ENCODE measurements at regions of chr9 and their contacts with region 1.

Region 1: DNA sequence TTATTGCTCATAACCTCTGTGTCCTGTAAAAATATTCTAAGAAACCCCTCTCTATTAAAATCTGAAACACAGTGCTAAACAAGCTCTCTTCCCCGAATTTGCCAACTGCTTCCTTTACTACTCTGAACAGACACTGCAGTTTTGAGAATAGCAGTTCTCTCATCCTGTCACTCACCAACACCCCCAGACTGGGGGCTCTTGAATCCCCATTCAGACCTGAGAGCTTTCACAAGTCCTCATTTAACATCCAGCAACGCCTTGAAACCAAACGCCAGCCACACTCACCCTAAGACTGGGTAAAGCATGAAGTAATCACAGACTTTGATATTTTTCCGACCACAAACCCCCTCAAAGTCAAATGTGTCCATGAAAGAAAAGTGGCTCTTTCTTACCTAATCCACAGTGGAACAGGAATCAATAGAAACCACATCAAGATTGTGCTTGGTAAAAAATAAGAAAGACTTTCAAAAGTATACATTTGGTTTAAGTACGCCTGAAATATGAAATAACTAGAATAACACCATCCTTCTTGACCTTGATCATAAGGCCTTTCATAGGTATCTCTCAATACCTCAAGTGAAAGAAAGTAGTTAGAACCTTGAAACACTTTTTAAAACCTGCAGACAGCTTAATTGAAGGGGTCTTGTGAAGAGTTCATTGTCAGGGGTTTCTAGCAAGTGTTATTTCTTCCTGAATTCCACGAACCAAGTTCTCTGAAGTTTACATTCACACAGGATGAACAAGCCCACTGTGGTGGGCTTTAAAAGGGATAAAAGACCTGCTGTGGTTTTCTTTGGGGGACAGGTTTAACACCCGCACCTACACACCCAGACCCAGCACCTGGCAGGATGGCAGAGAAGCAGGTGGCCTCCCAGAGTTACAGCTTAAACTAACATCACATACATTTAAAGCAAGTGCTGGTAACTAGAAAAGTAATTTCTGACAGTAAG is 412.6 kb downstream of the MLLT3 start:
- DNase-seq: peak; percentile 62
- H3K4me3 Mint-ChIP-seq: peak overlapping the region; percentile 25
- H3K27ac Mint-ChIP-seq: peak overlapping the region; percentile 89
- H3K4me1 Mint-ChIP-seq: peaks cover 39% of the 10 kb centered on the region
- H3K27me3 Mint-ChIP-seq: no peaks in the 10 kb centered on the region

Region 2: GRCh38 chr9:19946441-19947109 is 263.1 kb before region 1 on chr9:
- intact Hi-C with region 1: loop called (anchors 1 kb)
- DNase-seq: no peak
- H3K4me3 Mint-ChIP-seq: no peak overlapping the region
- H3K27ac Mint-ChIP-seq: no peak overlapping the region
- H3K4me1 Mint-ChIP-seq: peaks cover 22% of the 10 kb centered on the region
- H3K27me3 Mint-ChIP-seq: peaks cover 13% of the 10 kb centered on the region

Region 3: DNA sequence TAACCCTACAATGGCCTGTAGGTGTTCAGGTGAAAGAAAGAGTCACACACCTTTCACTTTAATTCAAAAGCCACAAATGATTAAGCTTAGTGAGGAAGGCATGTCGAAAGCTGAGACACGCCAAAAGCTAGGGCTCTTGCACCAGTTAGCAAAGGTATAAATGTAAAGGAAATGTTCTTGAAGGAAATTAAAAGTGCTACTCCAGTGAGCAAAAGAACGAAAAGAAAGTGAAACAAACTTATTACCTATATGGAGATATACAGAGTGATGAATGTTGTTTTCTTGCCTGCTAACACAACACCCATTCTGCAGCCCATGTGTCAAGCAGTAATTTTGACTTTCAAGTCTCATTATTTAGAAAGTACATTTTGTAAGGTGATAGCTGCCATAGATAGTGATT is 166.6 kb before region 1 on chr9:
- intact Hi-C with region 1: loop called (anchors 1 kb)
- DNase-seq: no peak
- H3K4me3 Mint-ChIP-seq: peak overlapping the region; percentile 78
- H3K27ac Mint-ChIP-seq: peak overlapping the region; percentile 79
- H3K4me1 Mint-ChIP-seq: peaks cover 45% of the 10 kb centered on the region
- H3K27me3 Mint-ChIP-seq: no peaks in the 10 kb centered on the region

Region 4: DNA sequence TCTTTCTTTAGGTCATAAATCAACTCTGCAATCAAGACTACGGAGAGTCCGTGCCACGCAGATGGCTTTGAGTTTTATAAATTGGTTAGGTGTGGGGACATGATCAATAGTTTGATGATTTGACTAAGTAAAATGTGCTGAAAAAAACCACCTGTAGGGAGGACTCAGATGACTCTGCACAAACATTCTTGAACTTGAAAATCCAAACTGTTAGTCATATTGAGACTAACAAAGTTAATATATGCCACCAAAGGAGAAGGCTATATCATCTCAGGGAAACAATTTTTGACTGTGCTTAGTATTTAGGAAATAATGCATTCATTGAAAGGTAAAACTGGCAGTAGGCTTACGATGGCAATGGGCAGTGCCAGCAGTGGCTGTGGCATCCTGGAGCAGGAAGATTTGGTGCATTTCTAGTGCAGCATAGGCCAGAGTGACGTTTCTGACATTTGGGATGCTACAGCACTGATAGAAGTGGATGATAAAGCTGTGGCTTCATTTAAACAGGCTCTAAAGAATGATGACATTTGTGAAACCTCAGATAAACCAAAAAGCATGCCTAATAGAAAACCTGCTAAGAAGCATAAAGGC is 121.5 kb after region 1 on chr9:
- intact Hi-C with region 1: loop called (anchors 1 kb)
- DNase-seq: no peak
- H3K4me3 Mint-ChIP-seq: no peak overlapping the region
- H3K27ac Mint-ChIP-seq: peak overlapping the region; percentile 69
- H3K4me1 Mint-ChIP-seq: peaks cover 37% of the 10 kb centered on the region
- H3K27me3 Mint-ChIP-seq: peaks cover 2% of the 10 kb centered on the region

Region 5: GRCh38 chr9:20929276-20929675 is 719.6 kb after region 1 on chr9:
- intact Hi-C with region 1: loop called (anchors 1 kb)
- DNase-seq: no peak
- H3K4me3 Mint-ChIP-seq: no peak overlapping the region
- H3K27ac Mint-ChIP-seq: no peak overlapping the region
- H3K4me1 Mint-ChIP-seq: peaks cover 30% of the 10 kb centered on the region
- H3K27me3 Mint-ChIP-seq: peaks cover 1% of the 10 kb centered on the region

Region 6: GRCh38 chr9:21357479-21358460 is 1148.1 kb after region 1 on chr9:
- intact Hi-C with region 1: loop called (anchors 1 kb)
- DNase-seq: no peak
- H3K4me3 Mint-ChIP-seq: peak overlapping the region; percentile 56
- H3K27ac Mint-ChIP-seq: peak overlapping the region; percentile 68
- H3K4me1 Mint-ChIP-seq: peaks cover 14% of the 10 kb centered on the region
- H3K27me3 Mint-ChIP-seq: peaks cover 57% of the 10 kb centered on the region